Activated CD4-positive, alpha-beta T cell treated with anti-CD3 and anti-CD28 coated beads, Interleukin-2, amount 10 ng/mL, durations not matched to agents 24 days and 14 days (primary cell): ENCODE measurements at regions of chr10 and their contacts with region 1.

Region 1: GRCh38 chr10:27558612-27559020 is 54.5 kb downstream of the RAB18 start:
- DNase-seq: peak; percentile 83
- H3K4me3 Mint-ChIP-seq: no peak overlapping the region
- H3K27ac Mint-ChIP-seq: no peak overlapping the region
- H3K4me1 Mint-ChIP-seq: no peaks in the 10 kb centered on the region
- H3K27me3 Mint-ChIP-seq: peaks cover 7% of the 10 kb centered on the region

Region 2: GRCh38 chr10:27482984-27483956 is 75.3 kb before region 1 on chr10:
- intact Hi-C with region 1: no loop called
- DNase-seq: no peak
- H3K4me3 Mint-ChIP-seq: no peak overlapping the region
- H3K27ac Mint-ChIP-seq: no peak overlapping the region
- H3K4me1 Mint-ChIP-seq: no peaks in the 10 kb centered on the region
- H3K27me3 Mint-ChIP-seq: peaks cover 30% of the 10 kb centered on the region

Region 3: GRCh38 chr10:27661514-27662286 is 103.1 kb after region 1 on chr10:
- intact Hi-C with region 1: loop called (anchors 1 kb)
- DNase-seq: no peak
- H3K4me3 Mint-ChIP-seq: no peak overlapping the region
- H3K27ac Mint-ChIP-seq: no peak overlapping the region
- H3K4me1 Mint-ChIP-seq: no peaks in the 10 kb centered on the region
- H3K27me3 Mint-ChIP-seq: peaks cover 35% of the 10 kb centered on the region

Region 4: DNA sequence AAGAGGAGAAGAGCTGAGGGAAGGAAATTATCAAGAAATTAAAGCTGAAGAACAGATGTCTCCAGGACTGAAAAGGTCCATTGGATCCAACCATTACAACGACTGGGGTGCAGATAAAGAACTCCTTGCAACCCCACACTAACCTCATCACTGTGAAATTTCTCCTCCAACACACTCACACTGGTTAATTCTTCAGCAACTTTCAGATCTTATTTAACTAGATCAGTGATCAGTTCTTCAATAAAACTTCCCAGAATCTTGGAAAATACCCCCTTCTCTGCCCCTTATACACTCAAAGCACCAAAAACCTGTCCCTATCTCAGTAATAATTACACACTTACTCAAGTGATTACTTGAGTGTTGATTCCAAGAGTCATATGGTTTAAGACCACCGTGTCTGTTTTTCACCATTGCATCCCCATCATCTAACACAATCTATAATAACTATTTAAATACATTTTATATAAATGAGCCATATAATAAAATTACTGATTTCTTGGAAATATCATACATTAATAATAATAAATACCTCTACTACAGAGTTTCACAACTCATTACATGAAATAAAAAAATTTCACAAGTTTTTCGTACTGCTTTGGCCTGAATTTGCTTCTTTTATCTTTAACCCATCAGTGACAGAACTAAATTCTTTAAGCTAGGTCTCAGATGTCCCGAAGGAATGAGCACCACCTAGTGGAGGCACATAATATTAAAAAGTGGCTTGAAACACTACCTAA is 620.6 kb after region 1 on chr10:
- intact Hi-C with region 1: loop called (anchors 1 kb)
- DNase-seq: peak; percentile 85
- H3K4me3 Mint-ChIP-seq: peak overlapping the region; percentile 76
- H3K27ac Mint-ChIP-seq: peak overlapping the region; percentile 85
- H3K4me1 Mint-ChIP-seq: peaks cover 23% of the 10 kb centered on the region
- H3K27me3 Mint-ChIP-seq: peaks cover 8% of the 10 kb centered on the region

Region 5: GRCh38 chr10:28241741-28242399 is 683.3 kb after region 1 on chr10:
- intact Hi-C with region 1: loop called (anchors 1 kb)
- DNase-seq: peak; percentile 80
- H3K4me3 Mint-ChIP-seq: no peak overlapping the region
- H3K27ac Mint-ChIP-seq: no peak overlapping the region
- H3K4me1 Mint-ChIP-seq: peaks cover 2% of the 10 kb centered on the region
- H3K27me3 Mint-ChIP-seq: peaks cover 3% of the 10 kb centered on the region